ENCODE measurements at regions of chr14 and their contacts with region 1.

Region 1: DNA sequence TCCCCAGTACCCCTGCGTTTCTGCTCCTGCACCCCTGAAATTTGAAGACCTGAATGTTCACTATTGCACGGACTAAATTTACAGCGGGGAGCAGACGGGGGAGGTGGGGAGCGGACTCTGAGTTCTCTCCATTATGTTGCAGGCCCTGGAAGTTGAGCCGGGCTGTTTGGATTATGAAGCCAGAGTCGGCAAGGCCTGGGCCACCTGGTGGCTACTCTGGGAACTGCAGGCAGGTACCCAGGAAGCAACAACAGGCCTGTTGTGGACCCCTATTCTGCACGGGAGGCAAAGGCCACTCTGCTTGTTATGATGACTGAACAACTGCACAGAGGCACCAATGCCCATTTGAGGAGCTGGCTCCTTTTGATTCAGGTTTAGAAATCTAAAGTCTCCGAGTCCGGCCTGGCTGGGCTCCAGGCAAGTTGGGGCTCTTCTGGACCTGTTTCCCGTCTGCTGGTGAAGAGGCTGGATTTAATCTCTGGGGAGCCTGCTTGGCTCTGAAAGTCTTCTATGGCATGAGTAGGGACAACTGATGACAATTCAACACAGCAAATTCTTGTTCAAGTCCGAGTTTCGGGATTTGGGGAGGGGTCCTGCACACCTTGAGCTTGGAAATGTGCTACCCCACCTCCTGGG is 34.1 kb upstream of the FAM181A start:
- DNase-seq: peak; percentile 68 to 79 (median 73)
- ATAC-seq: peak; percentile 45
- H3K4me3 ChIP-seq: no peak overlapping the region
- H3K27ac ChIP-seq: no peak overlapping the region
- H3K4me1 ChIP-seq: no peaks in the 10 kb centered on the region
- H3K27me3 ChIP-seq: no peaks in the 10 kb centered on the region
- CTCF ChIP-seq: peak; percentile 82 to 98 (median 85)
- POLR2A ChIP-seq: no peak

Region 2: DNA sequence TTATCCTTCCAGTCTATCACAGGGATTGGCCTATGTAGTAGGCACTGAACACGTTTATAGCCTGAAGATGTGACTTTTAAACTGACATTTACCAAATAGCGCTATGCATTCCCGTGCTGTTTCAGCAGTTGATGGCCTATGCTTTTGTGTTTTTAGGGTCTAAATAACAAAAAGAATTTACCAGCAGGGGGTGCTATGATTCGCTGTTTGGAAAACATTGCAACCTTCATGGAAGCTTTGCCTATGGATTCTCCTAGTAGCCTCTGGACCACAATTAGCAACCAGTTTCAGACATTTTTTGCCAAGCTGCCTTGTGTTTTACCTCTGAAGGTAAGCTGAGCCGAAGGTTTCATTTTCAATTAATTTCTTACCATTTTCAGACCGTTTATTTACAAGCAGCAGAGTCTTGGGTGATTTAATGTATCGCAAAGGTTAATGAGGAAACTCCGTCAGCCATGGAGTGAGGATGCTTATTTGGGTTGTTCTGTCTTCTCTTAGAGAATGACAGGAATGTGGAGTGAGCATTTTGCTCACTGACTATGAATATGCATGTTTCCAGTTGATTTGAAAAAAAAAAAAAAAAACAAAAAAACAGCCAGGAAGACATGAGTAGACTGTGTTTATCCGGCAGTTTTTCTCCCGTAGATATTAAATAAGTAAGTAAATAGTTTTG is 237.8 kb before region 1 on chr14:
- intact Hi-C with region 1: loop called (anchors 10 kb)
- DNase-seq: peak in 3 of 4 donors; percentile 5 to 20 (median 15)
- ATAC-seq: no peak
- H3K4me3 ChIP-seq: no peak overlapping the region
- H3K27ac ChIP-seq: no peak overlapping the region
- H3K4me1 ChIP-seq: no peaks in the 10 kb centered on the region
- H3K27me3 ChIP-seq: no peaks in the 10 kb centered on the region
- CTCF ChIP-seq: peak in 6 of 7 experiments; percentile 30 to 59 (median 46)
- POLR2A ChIP-seq: no peak

Region 3: GRCh38 chr14:94158239-94158883 is 265.3 kb after region 1 on chr14:
- intact Hi-C with region 1: no loop called
- DNase-seq: no peak
- ATAC-seq: no peak
- H3K4me3 ChIP-seq: no peak overlapping the region
- H3K27ac ChIP-seq: no peak overlapping the region
- H3K4me1 ChIP-seq: peaks cover 8% of the 10 kb centered on the region
- H3K27me3 ChIP-seq: no peaks in the 10 kb centered on the region
- CTCF ChIP-seq: no peak
- POLR2A ChIP-seq: no peak